ENCODE measurements at regions of chr20 and their contacts with region 1.

Region 1: DNA sequence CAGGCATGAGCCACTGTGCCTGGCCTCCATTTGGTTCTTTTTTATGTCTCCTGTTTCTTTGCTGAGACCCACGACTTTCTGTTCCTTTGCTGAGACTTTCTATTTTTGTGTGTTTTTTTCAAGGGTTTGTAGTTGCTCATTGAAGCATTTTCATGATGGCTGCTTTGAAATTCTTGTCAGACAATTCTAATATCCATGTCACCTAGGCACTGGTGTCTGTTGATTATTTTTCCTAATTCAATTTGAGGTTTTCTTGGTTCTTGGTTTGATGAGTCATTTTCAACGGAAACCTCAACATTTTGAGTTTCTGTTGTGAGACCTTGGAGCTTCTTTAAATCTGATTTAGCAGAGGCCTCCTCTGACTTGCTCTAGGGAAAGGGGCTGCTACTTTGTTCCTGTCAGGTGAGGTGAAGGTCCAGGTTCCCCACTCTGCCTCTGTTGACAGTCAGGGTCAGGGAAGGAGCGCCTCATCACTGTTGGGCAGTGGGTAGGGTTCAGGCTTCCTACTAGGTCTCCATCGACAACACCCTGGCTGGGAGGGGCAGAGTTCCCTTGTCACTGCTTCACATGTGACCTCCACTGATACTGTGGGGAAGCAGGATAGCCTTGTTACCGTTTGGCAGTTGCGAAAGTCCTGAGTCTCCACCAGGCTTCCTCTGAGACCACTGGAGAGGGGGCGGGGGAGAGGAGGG is 67.2 kb upstream of the RNF24 start:
- DNase-seq: peak; percentile 84
- H3K4me3 ChIP-seq: no peak overlapping the region
- H3K27ac ChIP-seq: peak overlapping the region in 1 of 4 donors; percentile 56
- H3K4me1 ChIP-seq: peaks cover 0 to 16% (median 13%) of the 10 kb centered on the region in 4 donors
- H3K27me3 ChIP-seq: no peaks in the 10 kb centered on the region
- CTCF ChIP-seq: no peak
- EP300 ChIP-seq: no peak
- POLR2A ChIP-seq: no peak

Region 2: GRCh38 chr20:3753098-3753980 is 329.2 kb before region 1 on chr20:
- intact Hi-C with region 1: loop called (anchors 10 kb)
- DNase-seq: peak; percentile 85
- H3K4me3 ChIP-seq: no peak overlapping the region
- H3K27ac ChIP-seq: peak overlapping the region in 2 of 4 donors; percentile 21 to 48
- H3K4me1 ChIP-seq: peaks cover 0 to 21% (median 8%) of the 10 kb centered on the region in 4 donors
- H3K27me3 ChIP-seq: peaks cover 0 to 11% (median 0%) of the 10 kb centered on the region in 3 donors
- CTCF ChIP-seq: peak; percentile 55 to 79 (median 74)
- EP300 ChIP-seq: no peak
- POLR2A ChIP-seq: no peak

Region 3: DNA sequence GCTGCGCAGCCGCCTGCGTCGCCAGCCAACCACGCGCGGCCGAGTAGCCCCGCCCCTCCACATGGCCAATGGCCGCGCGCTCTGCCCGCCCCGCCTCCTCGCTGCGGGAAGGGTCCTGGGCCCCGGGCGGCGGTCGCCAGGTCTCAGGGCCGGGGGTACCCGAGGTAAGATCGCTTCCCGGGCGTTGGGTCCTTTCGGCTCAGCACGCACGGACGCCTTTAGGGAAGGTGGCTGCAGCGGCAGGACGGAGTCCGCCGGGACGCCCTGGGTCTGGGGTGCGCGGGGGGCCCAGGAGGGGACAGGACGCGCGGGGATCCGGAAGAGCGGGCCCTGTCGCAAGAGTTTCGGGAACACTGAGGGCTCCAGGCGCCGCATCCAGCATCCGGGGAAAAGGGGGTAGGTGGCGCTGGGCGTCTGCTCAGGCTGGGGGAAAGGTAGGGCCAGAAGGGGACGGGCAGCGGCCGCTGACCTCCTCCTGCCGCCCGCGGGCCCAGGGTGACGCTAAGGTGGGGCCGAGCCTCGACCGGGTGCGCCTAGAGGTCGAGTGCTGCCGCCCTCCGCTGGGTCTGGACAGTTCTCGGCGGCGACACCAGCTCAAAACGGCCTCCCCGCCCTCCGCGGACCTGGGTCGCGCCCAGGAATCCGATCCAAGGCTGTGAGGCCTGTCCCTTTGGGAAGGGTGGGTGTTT is 235.7 kb before region 1 on chr20 and contains the start of gene MAVS:
- intact Hi-C with region 1: loop called (anchors 10 kb)
- DNase-seq: peak; percentile 94
- H3K4me3 ChIP-seq: peak within 1 kb of the TSS; percentile 88 to 98 (median 94)
- H3K27ac ChIP-seq: peak within 1 kb of the TSS; percentile 90 to 98 (median 94)
- H3K4me1 ChIP-seq: peaks cover 0 to 25% (median 17%) of the 10 kb centered on the region in 4 donors
- H3K27me3 ChIP-seq: no peaks in the 10 kb centered on the region
- CTCF ChIP-seq: no peak
- EP300 ChIP-seq: no peak
- POLR2A ChIP-seq: peak; percentile 42 to 53
- total RNA-seq, gene MAVS: 15.7 to 29.4 (median 19.7) TPM

Region 4: GRCh38 chr20:3888622-3889488 is 193.7 kb before region 1 on chr20 and contains the start of gene PANK2:
- intact Hi-C with region 1: loop called (anchors 2 kb)
- DNase-seq: peak; percentile 100
- H3K4me3 ChIP-seq: peak within 1 kb of the TSS; percentile 83 to 97 (median 89)
- H3K27ac ChIP-seq: peak within 1 kb of the TSS; percentile 95 to 98 (median 96)
- H3K4me1 ChIP-seq: peaks cover 0 to 48% (median 42%) of the 10 kb centered on the region in 4 donors
- H3K27me3 ChIP-seq: no peaks in the 10 kb centered on the region
- CTCF ChIP-seq: peak; percentile 24 to 58 (median 43)
- EP300 ChIP-seq: no peak
- POLR2A ChIP-seq: peak; percentile 85 to 89
- total RNA-seq, gene PANK2: 35.1 to 43.2 (median 39.0) TPM

Region 5: DNA sequence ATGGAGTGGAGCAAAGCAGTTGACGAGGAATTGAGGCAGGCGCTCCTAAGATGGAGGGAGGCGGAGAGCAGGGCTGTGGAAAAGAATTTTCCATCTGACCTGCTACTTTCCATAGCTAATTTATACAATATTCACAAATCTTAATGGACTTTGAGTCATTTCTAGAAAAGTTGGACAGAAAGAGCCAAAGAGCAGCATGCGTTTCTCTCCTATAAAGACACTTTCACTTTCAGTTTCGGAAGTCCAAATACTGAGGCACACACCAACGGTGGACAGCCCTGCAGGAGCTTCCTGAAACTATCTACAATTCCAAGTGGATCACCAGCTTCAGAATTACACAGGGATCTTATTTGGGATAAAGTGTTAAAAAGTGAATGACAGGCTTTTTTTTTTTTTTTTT is 149.9 kb before region 1 on chr20:
- intact Hi-C with region 1: loop called (anchors 10 kb)
- DNase-seq: no peak
- H3K4me3 ChIP-seq: peak overlapping the region; percentile 26 to 51 (median 46)
- H3K27ac ChIP-seq: peak overlapping the region; percentile 67 to 74 (median 70)
- H3K4me1 ChIP-seq: peaks cover 0 to 46% (median 42%) of the 10 kb centered on the region in 4 donors
- H3K27me3 ChIP-seq: no peaks in the 10 kb centered on the region
- CTCF ChIP-seq: no peak
- EP300 ChIP-seq: no peak
- POLR2A ChIP-seq: no peak

Region 6: DNA sequence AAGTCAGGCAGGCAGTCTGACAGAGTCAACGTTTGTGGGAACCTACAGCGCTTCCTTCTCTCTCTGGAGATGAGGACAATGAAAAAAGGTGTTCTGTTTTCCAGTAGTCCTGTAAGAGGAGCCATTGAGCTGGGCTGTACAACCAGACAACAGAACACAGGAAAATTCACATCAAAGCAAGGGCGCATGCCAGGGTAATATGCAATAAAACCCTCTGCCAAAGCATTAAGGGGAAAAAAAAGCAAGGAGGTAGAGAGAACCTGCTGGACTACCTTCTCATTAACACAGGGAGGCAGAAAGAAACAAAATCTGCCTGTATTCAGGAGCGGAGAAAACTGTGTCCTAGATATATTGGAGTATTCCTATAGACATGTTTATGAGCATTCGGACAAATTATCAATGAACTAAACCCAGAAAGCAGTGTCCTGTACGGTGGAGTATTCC is 68.5 kb before region 1 on chr20:
- intact Hi-C with region 1: loop called (anchors 1 kb)
- DNase-seq: no peak
- H3K4me3 ChIP-seq: peak overlapping the region in 2 of 4 donors; percentile 68 to 90
- H3K27ac ChIP-seq: peak overlapping the region; percentile 8 to 86 (median 82)
- H3K4me1 ChIP-seq: peaks cover 0 to 21% (median 18%) of the 10 kb centered on the region in 4 donors
- H3K27me3 ChIP-seq: no peaks in the 10 kb centered on the region
- CTCF ChIP-seq: peak in 3 of 4 experiments; percentile 30 to 52 (median 36)
- EP300 ChIP-seq: no peak
- POLR2A ChIP-seq: no peak

Region 7: DNA sequence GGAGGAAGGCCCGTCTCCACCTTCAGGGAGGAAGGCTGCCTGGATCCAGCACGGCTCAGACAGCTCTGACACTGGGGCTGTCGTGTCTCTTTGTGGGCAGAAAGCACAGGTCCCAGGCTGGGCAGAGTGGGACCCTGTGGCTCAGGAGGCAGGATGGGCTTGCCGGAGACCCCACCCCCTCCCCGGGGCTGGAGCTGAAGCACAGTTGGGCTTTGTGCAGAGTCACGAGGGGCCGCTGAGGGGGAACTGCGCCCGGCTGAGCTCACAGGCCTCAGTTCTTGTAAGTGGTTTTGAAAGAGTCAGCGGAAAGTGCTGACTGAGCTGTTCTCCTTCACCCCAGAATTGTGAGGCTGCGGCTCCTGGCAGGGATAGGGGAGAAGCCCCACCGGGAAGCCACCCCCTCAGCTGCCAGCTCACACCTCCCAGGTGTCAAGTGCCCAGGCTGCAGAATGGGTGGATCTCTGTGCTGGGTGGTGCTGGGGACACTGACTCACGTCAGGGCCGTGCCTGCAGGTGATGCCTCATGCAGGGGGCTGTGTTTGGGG is 78.3 kb after region 1 on chr20:
- intact Hi-C with region 1: no loop called
- DNase-seq: peak; percentile 82
- H3K4me3 ChIP-seq: no peak overlapping the region
- H3K27ac ChIP-seq: peak overlapping the region in 3 of 4 donors; percentile 11 to 34 (median 22)
- H3K4me1 ChIP-seq: peaks cover 0 to 8% (median 5%) of the 10 kb centered on the region in 4 donors
- H3K27me3 ChIP-seq: no peaks in the 10 kb centered on the region
- CTCF ChIP-seq: no peak
- EP300 ChIP-seq: no peak
- POLR2A ChIP-seq: no peak

Region 8: DNA sequence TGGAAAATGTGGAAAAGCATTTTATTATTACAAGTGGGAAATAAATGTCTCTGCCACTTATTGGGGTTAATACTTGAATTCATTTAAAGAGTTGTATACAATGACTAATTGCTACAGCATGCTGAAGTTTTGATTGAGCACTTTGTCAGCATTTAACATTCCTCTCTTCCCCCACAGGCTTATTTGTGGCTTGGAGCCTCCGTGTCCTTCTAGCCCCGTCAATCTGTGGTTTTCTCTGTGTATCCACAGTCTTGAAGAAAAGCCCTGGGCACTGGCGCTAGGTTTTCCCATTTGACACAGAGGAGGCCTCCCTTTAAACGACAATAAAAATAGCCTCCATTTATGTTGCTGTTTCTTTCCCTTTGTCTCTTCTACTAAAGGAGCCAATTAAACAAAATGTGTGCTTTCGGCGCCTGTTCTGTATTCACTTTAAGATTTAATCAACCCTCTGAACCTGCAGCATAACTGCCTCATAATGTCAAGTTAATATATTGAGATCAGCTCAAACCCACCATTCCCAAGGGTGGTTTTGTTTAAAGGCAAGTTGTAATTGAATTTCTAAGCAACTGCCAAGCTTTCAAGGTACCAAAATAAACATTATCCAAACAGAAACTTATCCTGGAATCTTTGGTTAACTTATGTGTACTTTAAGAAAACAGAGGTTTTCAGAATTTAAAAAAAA is 259.4 kb after region 1 on chr20:
- intact Hi-C with region 1: no loop called
- DNase-seq: no peak
- H3K4me3 ChIP-seq: no peak overlapping the region
- H3K27ac ChIP-seq: no peak overlapping the region
- H3K4me1 ChIP-seq: peaks cover 0 to 15% (median 9%) of the 10 kb centered on the region in 4 donors
- H3K27me3 ChIP-seq: no peaks in the 10 kb centered on the region
- CTCF ChIP-seq: no peak
- EP300 ChIP-seq: no peak
- POLR2A ChIP-seq: no peak